Colonic mucosa (tissue), 4 donors: ENCODE measurements at regions of chr4 and their contacts with region 1.

Region 1: GRCh38 chr4:54217642-54218495 is 11.2 kb upstream of the PDGFRA start:
- DNase-seq: peak; percentile 79
- H3K4me3 ChIP-seq: peak overlapping the region; percentile 12
- H3K27ac ChIP-seq: no peak overlapping the region
- H3K4me1 ChIP-seq: no peaks in the 10 kb centered on the region
- H3K27me3 ChIP-seq: peaks cover 8% of the 10 kb centered on the region
- CTCF ChIP-seq: peak; percentile 83

Region 2: DNA sequence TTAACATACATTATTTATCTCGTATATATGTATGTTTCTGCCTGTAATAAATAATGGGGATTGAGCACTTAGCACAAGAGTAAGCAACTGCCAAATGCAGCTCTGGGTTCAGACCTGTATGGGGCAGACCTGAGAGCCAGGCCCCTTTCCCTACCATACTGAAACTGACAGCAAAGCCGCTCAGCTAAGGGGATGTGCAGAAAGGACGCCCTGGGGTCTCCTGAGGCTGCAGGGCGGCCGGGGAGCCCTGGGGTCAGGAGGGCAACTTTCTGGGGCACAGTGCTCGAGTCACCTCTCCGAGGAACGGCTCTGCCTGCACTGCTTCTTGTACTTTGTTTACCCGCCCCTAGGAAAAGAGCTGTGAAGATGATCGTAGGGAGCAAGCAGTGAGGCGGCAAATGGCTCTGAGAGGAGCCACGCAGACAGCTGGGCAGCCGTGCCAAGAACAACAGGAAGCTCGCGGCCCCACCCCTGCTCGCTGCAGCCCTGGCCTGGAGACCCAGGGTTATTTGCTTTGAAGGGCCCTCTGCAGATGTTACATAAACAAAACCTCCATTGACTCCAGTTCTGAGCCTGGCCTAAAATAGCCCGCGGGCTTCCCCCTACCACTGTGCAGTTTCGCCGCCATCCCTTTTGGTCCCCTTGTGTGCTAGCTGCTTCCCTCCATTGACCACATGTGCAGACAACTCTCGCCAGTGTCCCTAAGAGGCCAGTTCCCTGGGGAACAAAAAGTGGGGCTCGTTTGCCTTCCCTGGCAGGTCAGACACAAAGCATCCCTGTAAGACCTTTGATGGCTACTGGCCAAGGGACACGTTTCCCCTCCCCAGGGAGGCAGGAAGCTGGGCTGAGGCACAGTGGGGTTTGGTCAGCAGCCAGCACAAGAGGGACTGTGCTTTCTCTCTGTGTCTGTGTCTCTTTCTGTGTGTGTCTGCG is 515.3 kb before region 1 on chr4:
- intact Hi-C with region 1: loop called (anchors 10 kb)
- DNase-seq: peak; percentile 83
- H3K4me3 ChIP-seq: peak overlapping the region; percentile 5
- H3K27ac ChIP-seq: peak overlapping the region; percentile 65
- H3K4me1 ChIP-seq: peaks cover 7% of the 10 kb centered on the region
- H3K27me3 ChIP-seq: no peaks in the 10 kb centered on the region
- CTCF ChIP-seq: no peak

Region 3: DNA sequence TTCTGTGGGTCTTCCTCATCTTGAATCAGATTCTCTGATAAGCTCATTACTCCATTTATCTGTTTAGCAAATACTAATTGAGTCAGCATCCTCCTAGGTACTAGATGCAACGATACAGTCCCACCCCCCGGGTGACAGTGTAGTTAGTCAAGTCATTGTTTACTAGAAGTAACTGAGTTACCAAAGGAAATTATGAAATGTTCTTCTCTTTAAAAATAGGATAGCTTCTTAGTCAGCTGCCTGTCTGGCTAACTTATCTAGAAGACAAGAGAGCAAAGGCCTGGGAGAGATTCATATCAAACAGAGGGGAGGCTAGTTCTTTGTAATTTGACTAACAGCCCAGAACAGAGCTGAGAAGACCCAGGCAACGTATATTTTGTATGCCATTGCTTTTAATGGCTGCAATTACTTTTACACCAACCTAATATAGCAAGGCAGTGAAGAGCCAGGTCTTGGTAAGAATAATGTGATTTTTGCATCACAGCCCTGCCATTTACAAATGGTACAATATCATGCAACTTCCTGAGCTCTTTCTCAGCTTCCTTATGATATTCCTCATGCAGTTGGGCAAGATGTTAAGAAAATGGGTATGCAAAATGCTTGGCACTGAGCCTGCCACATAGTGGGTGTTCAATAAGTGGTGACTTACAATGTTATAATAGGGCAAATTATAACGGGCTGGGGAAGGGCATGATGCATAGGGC is 303.4 kb before region 1 on chr4:
- intact Hi-C with region 1: loop called (anchors 5 kb)
- DNase-seq: no peak
- H3K4me3 ChIP-seq: no peak overlapping the region
- H3K27ac ChIP-seq: no peak overlapping the region
- H3K4me1 ChIP-seq: no peaks in the 10 kb centered on the region
- H3K27me3 ChIP-seq: no peaks in the 10 kb centered on the region
- CTCF ChIP-seq: no peak

Region 4: GRCh38 chr4:53929955-53930798 is 287.7 kb before region 1 on chr4:
- intact Hi-C with region 1: loop called (anchors 2 kb)
- DNase-seq: peak; percentile 71
- H3K4me3 ChIP-seq: no peak overlapping the region
- H3K27ac ChIP-seq: no peak overlapping the region
- H3K4me1 ChIP-seq: no peaks in the 10 kb centered on the region
- H3K27me3 ChIP-seq: no peaks in the 10 kb centered on the region
- CTCF ChIP-seq: peak; percentile 66

Region 5: DNA sequence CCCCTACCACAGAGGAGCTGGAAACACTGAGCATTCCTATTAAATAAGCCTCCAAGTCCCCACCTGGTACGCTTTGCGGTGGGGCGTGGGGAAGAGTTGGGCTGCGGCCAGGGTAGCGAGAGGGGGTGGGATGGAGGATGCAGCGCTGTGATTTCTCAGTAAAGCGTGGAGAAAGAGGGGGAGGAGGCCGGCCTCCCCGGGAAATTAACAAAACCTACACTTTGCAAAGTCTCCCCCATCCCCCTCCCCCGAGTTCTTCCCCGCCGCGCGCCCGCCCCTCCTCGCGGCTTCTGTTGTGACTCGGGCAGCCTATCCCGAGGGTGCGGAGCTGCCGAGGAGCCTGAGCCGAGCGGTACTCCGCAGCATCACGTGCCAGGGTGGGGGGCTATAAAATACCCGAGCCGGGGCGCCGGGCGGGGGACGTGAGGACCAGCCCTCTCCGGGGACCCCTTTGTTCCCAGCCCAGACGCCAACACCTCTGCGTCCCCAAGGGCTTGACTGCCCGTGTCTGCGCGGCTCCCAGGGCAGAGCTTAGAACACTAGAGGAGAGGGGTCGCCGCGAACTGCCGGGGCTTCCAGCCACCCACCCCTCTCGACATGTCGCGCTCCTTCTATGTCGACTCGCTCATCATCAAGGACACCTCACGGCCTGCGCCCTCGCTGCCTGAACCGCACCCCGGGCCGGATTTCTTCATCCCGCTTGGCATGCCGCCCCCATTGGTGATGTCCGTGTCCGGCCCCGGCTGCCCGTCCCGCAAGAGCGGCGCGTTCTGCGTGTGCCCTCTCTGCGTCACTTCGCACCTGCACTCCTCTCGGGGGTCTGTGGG is 117.9 kb before region 1 on chr4 and contains the start of gene GSX2:
- intact Hi-C with region 1: loop called (anchors 10 kb)
- DNase-seq: no peak
- H3K4me3 ChIP-seq: peak within 1 kb of the TSS; percentile 19
- H3K27ac ChIP-seq: no peak within 1 kb of the TSS
- H3K4me1 ChIP-seq: peaks cover 6% of the 10 kb centered on the region
- H3K27me3 ChIP-seq: peaks cover 91% of the 10 kb centered on the region
- CTCF ChIP-seq: no peak
- total RNA-seq, gene GSX2: not detected

Region 6: DNA sequence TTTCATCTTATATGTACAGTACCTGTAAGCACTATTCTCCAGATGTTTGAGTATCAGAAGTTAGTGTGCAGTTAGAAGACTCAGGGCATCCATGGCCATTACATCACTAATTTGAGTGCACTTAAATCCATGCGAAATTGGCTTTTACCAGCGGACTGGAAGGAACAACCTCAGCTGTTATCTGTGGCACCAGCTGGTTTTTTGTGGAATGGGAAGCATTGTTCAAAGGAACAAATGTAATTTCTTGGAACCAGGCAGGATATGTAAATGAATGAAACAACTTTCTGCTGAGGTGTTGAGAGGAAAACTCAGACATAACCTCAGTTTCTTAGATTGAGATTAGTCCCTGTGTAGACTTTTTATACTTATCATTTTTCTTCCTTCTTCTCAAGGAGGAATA is 71.4 kb after region 1 on chr4:
- intact Hi-C with region 1: no loop called
- DNase-seq: no peak
- H3K4me3 ChIP-seq: no peak overlapping the region
- H3K27ac ChIP-seq: no peak overlapping the region
- H3K4me1 ChIP-seq: no peaks in the 10 kb centered on the region
- H3K27me3 ChIP-seq: no peaks in the 10 kb centered on the region
- CTCF ChIP-seq: no peak

Region 7: DNA sequence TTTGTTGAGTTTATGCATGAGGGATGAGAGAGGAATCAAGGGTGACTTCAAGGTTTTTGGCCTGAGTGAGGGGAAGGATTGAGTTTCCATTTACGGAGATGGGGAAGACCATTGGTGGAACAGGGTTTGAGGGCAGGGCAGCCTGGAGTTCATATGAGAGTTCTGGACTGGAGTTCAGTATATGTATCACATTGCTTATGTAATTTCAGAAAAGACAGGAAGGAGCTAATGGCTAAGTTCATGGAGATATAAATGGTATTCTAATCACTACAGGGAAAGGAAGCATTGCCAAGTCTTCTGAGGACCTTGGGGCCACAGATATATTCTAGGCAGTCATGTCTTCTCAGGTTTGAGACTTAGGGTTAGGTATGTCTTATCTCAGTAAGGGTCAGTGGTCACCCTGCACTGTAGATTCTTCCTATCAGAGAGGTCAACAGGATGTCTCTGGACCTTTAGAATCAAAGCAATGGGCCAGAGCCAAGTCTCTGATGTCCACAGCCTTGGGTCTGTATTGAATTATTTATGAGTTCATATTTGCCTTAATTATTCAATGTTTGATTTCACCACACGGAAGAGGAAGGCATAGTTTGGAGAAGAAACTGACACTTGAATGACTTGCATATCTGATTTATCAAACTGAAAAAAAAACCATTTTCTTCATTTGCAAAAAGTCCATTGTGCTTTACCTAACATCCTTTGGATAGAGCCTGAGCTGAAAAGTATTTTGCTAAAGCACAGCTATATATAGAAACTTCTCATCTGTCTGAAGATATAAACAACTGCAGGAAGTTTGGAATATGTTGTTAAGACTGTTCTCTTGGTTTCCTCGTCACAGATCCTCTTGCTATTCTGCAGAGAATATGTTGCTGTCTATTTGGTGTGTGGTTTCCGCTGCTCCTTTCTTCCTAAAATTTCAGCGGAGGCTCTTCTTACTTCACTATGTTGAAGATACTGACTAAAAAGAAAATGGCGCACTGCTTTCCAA is 150.7 kb after region 1 on chr4:
- intact Hi-C with region 1: no loop called
- DNase-seq: no peak
- H3K4me3 ChIP-seq: no peak overlapping the region
- H3K27ac ChIP-seq: no peak overlapping the region
- H3K4me1 ChIP-seq: no peaks in the 10 kb centered on the region
- H3K27me3 ChIP-seq: no peaks in the 10 kb centered on the region
- CTCF ChIP-seq: no peak

Region 8: GRCh38 chr4:54566608-54567007 is 348.7 kb after region 1 on chr4:
- intact Hi-C with region 1: no loop called
- DNase-seq: no peak
- H3K4me3 ChIP-seq: no peak overlapping the region
- H3K27ac ChIP-seq: no peak overlapping the region
- H3K4me1 ChIP-seq: no peaks in the 10 kb centered on the region
- H3K27me3 ChIP-seq: no peaks in the 10 kb centered on the region
- CTCF ChIP-seq: no peak